OCI-LY7 (cell line): ENCODE measurements at regions of chr3 and their contacts with region 1.

Region 1: DNA sequence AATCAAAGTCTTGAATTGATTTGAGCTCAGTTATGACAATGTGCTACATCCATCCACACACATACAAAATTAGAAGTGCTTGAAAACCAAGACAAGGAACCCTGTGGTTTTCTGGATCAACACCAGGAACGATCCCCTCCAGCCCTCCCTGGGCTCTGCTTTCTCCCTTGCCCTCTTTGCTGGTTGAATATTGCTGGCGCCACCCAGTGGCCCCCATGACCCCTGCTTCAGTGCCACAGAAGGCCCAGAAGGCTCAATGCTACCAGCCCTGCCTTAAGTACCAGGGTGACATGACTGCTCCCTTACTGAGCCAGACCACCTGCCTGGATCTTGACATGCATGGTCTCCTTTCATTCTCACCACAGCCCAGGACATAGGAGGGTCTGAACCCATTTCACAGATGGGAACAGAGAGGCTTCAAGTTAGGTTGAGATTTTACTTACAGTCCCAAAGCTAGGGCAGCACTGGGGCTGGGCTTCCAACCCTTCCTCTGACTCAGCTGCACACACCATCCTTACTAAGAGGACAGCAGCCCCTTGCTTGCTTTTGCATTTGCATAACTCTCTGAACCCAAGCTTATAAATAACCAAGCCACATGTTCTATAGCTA is 15.0 kb downstream of the IL12A start:
- DNase-seq: peak; percentile 23
- H3K4me3 ChIP-seq: no peak overlapping the region
- H3K27ac ChIP-seq: no peak overlapping the region
- H3K4me1 ChIP-seq: no peaks in the 10 kb centered on the region
- CTCF ChIP-seq: peak; percentile 76

Region 2: DNA sequence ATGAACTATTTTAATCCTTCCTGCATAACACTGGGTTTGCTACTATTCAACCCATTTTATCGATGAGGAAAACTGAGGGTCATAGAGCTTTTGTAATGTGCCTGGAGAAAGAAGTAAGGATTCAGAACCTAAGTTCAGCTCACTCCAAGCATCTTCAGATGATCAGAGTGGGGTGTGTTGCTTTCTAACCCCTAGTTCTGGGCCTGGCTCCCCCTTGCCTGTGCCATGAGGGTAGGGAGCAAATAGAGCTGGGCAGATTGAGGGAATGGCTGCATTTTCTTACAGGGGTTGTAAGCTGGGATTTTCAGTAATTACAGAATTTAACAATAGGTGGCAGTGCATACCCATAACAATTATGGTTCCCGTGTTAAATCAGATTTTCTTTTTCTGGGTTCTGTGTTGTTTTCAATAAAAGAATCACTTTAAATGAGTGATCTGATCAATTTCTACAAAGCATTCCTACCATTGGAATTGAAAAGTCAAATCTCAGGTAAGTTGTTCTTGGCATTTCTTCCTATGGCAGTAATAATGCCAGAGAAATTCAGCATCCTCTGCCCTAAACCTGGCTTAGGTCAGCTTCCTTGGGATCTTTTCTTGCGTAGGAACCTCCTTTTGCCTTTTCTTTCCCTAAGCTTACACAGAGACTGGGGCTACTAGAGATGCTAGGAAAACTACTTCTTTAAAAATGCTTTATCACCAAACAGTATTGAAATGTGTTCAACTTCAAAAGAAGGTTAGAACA is 118.8 kb before region 1 on chr3:
- CTCF ChIA-PET with region 1: interaction called, 5 read pairs
- POLR2A ChIA-PET with region 1: interaction called, 4 read pairs
- intact Hi-C with region 1: loop called (anchors 1 kb)
- DNase-seq: peak; percentile 32
- H3K4me3 ChIP-seq: no peak overlapping the region
- H3K27ac ChIP-seq: no peak overlapping the region
- H3K4me1 ChIP-seq: no peaks in the 10 kb centered on the region
- CTCF ChIP-seq: peak; percentile 80

Region 3: GRCh38 chr3:160319322-160319721 is 315.7 kb after region 1 on chr3:
- CTCF ChIA-PET with region 1: no interaction called
- POLR2A ChIA-PET with region 1: no interaction called
- intact Hi-C with region 1: no loop called
- DNase-seq: no peak
- H3K4me3 ChIP-seq: no peak overlapping the region
- H3K27ac ChIP-seq: no peak overlapping the region
- H3K4me1 ChIP-seq: no peaks in the 10 kb centered on the region
- CTCF ChIP-seq: no peak

Region 4: DNA sequence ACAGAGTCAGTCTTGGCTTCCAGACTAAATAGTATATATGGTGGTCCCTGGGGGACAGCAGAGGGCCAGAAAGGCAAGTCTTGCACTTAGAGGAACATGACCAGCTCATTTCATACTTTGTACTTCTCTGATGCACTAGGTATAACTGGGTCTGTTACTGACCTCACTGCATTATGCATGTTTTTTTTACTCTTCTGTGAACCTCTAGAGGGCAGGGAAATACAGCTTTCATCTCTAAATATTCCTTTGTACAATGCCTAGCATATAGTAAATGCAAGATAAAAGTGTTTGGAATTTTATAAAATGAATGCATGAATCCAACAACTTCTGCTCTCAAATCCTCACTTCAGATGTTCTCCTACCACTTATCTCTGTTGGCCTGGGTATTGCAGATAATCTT is 649.9 kb after region 1 on chr3:
- CTCF ChIA-PET with region 1: no interaction called
- POLR2A ChIA-PET with region 1: no interaction called
- intact Hi-C with region 1: no loop called
- DNase-seq: no peak
- H3K4me3 ChIP-seq: no peak overlapping the region
- H3K27ac ChIP-seq: no peak overlapping the region
- H3K4me1 ChIP-seq: no peaks in the 10 kb centered on the region
- CTCF ChIP-seq: no peak